GM10248 (cell line): ENCODE measurements at regions of chr16 and their contacts with region 1.

Region 1: DNA sequence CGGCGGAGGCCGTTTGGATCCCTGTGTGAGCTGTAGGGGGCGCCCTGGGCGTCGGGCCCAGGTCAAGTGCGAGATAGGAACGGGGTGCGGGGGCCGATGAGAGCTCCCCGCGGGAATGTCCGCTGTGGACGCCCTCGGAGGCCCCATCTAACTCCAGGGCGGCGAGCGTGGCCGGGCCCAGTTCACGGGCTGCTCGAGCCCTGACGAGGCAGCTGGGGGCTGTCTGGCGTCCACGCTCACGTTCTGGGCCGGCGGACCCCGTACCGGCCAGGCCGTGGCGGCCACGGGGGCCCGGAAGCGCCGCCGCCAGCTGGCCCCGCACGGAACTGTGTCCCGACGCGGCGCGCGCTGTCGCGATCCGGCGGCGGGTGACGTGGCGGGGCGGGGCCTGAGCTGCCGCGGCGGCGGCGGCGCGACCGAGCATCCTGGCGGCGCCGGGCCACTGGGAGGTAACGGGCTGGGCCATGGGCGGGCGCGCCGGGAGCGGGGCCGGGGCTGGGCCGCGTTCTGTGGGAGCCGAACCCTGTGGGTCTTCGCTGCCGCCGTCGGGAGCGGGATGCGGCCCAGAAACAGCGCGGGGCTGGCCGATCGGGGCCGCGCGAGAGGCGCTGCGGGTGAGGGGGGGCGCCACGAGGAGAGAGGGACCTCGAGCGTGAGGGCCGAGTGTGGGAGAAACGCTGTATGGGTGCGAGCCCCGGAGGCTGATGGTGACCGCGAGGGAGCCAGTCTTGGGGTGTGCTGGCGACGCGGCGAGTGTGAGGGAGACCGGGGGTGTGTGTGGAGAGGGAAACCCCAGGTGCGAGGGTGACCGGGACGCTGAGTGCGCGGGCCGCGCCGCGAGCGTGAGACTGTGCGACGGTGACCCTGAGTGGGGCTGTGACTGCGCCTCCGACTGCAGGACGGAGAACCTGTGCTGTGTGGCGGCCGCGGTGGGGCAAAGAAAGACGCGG is at the start of gene SLC7A6:
- DNase-seq: peak; percentile 90
- CTCF ChIP-seq: peak; percentile 80

Region 2: GRCh38 chr16:68190081-68190480 is 74.3 kb before region 1 on chr16:
- CTCF ChIA-PET with region 1: no interaction called
- POLR2A ChIA-PET with region 1: no interaction called
- DNase-seq: no peak
- CTCF ChIP-seq: no peak

Region 3: DNA sequence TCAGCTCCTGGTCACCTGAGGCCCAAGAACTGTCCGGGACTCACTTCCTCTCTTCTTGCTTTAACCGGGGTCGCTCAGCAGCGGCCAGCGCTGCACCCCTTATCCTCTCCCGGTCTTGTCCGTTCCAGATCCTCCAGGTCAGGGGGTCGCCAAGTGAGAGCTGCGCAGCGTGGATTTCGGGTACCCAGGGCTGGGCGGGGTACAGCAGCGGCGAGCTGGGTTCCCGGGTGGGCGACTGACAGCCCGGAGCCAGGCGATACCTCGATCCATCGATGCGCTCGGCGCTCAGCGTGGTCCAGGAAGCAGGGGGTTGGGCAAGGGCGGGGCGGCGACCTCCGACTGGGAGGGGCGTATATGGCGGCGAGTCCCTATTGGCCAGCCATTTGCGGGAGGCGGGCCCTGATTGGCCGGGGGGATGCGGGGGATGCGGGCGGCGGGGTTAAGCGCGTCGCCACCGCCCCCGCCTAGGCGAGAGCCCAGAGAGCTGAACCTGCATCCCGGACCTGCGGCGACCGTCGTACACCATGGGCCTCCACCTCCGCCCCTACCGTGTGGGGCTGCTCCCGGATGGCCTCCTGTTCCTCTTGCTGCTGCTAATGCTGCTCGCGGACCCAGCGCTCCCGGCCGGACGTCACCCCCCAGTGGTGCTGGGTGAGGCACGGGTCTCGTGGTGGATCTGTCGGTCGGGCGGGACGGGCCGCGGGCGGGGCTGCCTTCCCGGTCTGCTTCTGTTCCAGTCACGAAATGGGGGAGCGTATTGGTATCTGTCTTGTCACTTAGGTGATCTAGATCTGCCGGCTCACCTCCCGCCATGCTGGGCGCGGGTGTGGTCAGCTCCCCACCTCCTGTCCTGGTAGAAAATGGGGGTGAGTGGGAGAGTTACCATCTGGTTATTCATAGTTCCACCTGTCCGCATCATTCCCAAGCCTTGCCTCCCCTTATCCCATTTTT is 19.2 kb before region 1 on chr16 and contains the start of gene PLA2G15:
- CTCF ChIA-PET with region 1: interaction called, 113 read pairs
- POLR2A ChIA-PET with region 1: no interaction called
- DNase-seq: peak; percentile 98
- CTCF ChIP-seq: no peak

Region 4: GRCh38 chr16:68289621-68290329 is 25.4 kb after region 1 on chr16:
- CTCF ChIA-PET with region 1: interaction called, 268 read pairs
- POLR2A ChIA-PET with region 1: interaction called, 6 read pairs
- DNase-seq: peak; percentile 85
- CTCF ChIP-seq: no peak

Region 5: GRCh38 chr16:68310761-68311511 is 46.5 kb after region 1 on chr16 and contains the starts of genes PRMT7 and SLC7A6OS:
- CTCF ChIA-PET with region 1: interaction called, 619 read pairs
- POLR2A ChIA-PET with region 1: interaction called, 7 read pairs
- DNase-seq: peak; percentile 98
- CTCF ChIP-seq: no peak

Region 6: DNA sequence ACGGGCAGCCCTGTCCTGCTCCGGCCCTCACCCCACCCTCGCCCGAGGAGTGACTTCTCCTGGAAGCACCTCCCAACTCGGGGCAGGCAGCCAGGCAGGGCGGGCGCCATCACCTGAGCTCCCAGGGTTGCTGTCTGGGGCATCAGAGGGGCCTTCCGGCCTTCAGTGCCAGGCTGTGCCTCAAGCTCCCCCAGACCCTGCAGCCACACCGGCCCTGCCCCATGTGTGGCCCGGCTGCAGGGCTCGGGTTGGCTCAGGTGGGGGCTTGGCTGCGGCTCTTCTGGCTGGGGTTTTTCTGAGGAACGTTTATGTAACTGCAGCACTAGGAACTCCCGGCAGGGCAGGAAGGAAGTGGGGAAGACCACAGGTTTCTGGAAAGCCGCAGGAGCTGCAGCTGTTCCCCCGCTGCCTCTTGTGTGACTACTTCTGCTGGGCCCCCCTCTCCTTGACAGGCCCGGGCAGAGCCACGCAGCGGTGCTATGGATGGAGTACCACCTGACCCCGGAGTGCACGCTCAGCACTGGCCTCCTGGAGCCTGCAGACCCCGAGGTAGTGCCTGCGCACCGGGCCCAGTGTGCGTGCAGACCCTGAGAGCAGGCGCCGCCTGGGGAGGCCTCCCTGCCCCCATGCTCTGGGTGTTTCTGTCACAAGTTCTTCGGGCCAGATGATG is 92.0 kb after region 1 on chr16:
- CTCF ChIA-PET with region 1: interaction called, 24 read pairs
- POLR2A ChIA-PET with region 1: no interaction called
- DNase-seq: peak; percentile 87
- CTCF ChIP-seq: no peak